ENCODE measurements at regions of chr16 and their contacts with region 1.

Region 1: GRCh38 chr16:10578474-10579316 is 1.7 kb downstream of the EMP2 start:
- DNase-seq: peak; percentile 36
- H3K27ac ChIP-seq: peak overlapping the region; percentile 52
- CTCF ChIP-seq: no peak

Region 2: GRCh38 chr16:10541366-10541765 is 37.3 kb before region 1 on chr16:
- CTCF ChIA-PET with region 1: no interaction called
- POLR2A ChIA-PET with region 1: interaction called, 10 read pairs
- DNase-seq: no peak
- H3K27ac ChIP-seq: no peak overlapping the region
- CTCF ChIP-seq: no peak

Region 3: GRCh38 chr16:10552998-10553491 is 25.6 kb before region 1 on chr16:
- CTCF ChIA-PET with region 1: no interaction called
- POLR2A ChIA-PET with region 1: no interaction called
- DNase-seq: no peak
- H3K27ac ChIP-seq: no peak overlapping the region
- CTCF ChIP-seq: no peak

Region 4: GRCh38 chr16:11431915-11432465 is 853.3 kb after region 1 on chr16:
- CTCF ChIA-PET with region 1: no interaction called
- POLR2A ChIA-PET with region 1: no interaction called
- DNase-seq: no peak
- H3K27ac ChIP-seq: no peak overlapping the region
- CTCF ChIP-seq: no peak